Caco-2 (cell line): ENCODE measurements at regions of chr7 and their contacts with region 1.

Region 1: DNA sequence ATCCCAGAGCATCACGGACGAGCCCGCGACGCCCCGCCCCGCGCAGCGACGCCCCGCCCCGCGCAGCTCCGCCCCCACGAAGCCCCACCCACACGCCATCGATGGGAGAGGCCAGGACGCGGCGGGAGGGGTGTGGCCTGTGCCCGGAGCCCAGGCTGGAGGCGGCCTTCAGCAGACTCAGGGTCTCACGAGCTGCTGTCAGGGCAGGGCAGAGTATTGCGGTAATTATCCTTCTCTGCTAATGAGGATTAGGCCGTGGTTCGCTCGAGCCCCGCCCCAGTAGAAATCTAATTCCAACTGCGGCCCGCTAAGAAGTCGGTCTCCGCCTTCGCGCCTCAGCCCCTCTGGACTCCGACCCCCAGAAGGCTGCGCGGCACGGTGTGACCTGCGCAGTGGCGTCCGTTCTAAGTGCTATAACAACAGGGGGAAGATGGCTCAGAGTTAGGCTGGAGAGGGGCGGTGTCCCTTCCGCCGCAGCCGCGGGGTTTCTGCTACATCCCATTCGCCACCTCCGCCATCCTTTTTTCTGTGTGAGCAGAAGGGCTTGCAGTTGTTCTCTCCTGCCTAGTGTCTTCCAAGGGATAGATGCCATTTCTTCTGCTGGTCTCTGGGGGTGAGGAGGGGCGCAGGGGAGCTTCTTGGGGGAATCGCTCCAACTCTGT is 337 bp upstream of the NT5C3A start:
- DNase-seq: peak; percentile 94
- H3K4me3 ChIP-seq: peak overlapping the region; percentile 91
- H3K4me3 Mint-ChIP-seq: peak overlapping the region; percentile 97
- H3K27ac Mint-ChIP-seq: peak overlapping the region; percentile 87
- H3K4me1 ChIP-seq: 0 out of 2 replicates have a peak, but pooled peaks cover 5% of the 10 kb centered on the region
- H3K4me1 Mint-ChIP-seq: peaks cover 7% of the 10 kb centered on the region
- H3K27me3 ChIP-seq: no peaks in the 10 kb centered on the region
- H3K27me3 Mint-ChIP-seq: no peaks in the 10 kb centered on the region
- CTCF ChIP-seq: no peak

Region 2: GRCh38 chr7:33040803-33041516 is 22.0 kb before region 1 on chr7:
- CTCF ChIA-PET with region 1: interaction called, 4 read pairs
- POLR2A ChIA-PET with region 1: no interaction called
- intact Hi-C with region 1: loop called (anchors 1 kb)
- DNase-seq: no peak
- H3K4me3 ChIP-seq: no peak overlapping the region
- H3K4me3 Mint-ChIP-seq: no peak overlapping the region
- H3K27ac Mint-ChIP-seq: no peak overlapping the region
- H3K4me1 ChIP-seq: peaks cover 32% of the 10 kb centered on the region
- H3K4me1 Mint-ChIP-seq: peaks cover 31% of the 10 kb centered on the region
- H3K27me3 ChIP-seq: no peaks in the 10 kb centered on the region
- H3K27me3 Mint-ChIP-seq: no peaks in the 10 kb centered on the region
- CTCF ChIP-seq: no peak

Region 3: GRCh38 chr7:33128990-33129805 is 66.3 kb after region 1 on chr7 and contains the start of gene BBS9:
- CTCF ChIA-PET with region 1: no interaction called
- POLR2A ChIA-PET with region 1: no interaction called
- intact Hi-C with region 1: loop called (anchors 5 kb)
- DNase-seq: peak; percentile 92 to 94
- H3K4me3 ChIP-seq: peak within 1 kb of the TSS; percentile 97
- H3K4me3 Mint-ChIP-seq: peak within 1 kb of the TSS; percentile 92
- H3K27ac Mint-ChIP-seq: peak within 1 kb of the TSS; percentile 85
- H3K4me1 ChIP-seq: no peaks in the 10 kb centered on the region
- H3K4me1 Mint-ChIP-seq: no peaks in the 10 kb centered on the region
- H3K27me3 ChIP-seq: no peaks in the 10 kb centered on the region
- H3K27me3 Mint-ChIP-seq: peaks cover 3% of the 10 kb centered on the region
- CTCF ChIP-seq: no peak
- total RNA-seq, gene BBS9: 4.7 and 5.6 TPM in 2 replicates

Region 4: GRCh38 chr7:33471636-33472242 is 408.8 kb after region 1 on chr7:
- CTCF ChIA-PET with region 1: no interaction called
- POLR2A ChIA-PET with region 1: no interaction called
- intact Hi-C with region 1: no loop called
- DNase-seq: no peak
- H3K4me3 ChIP-seq: no peak overlapping the region
- H3K4me3 Mint-ChIP-seq: no peak overlapping the region
- H3K27ac Mint-ChIP-seq: no peak overlapping the region
- H3K4me1 ChIP-seq: no peaks in the 10 kb centered on the region
- H3K4me1 Mint-ChIP-seq: no peaks in the 10 kb centered on the region
- H3K27me3 ChIP-seq: no peaks in the 10 kb centered on the region
- H3K27me3 Mint-ChIP-seq: peaks cover 3% of the 10 kb centered on the region
- CTCF ChIP-seq: no peak